Posterior vena cava (tissue), 2 donors: ENCODE measurements at regions of chr7 and their contacts with region 1.

Region 1: DNA sequence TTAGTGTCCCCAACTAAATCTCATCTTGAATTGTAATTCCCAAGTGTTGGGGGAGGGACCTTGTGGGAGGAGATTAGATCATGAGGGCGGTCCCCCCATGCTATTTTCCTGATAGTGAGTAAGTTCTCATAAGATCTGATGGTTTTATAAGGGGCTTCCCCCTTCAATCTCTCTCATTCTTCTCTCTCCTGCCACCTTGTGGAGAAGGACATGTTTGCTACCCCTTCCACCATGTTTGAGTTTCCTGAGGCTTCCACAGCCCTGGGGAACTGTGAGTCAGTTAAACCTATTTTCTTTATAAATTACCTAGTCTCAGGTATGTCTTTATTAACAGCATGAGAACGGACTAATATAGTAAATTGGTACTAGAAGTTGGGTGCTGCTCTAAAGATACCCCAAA is 365.6 kb downstream of the ANKRD7 start:
- DNase-seq: no peak

Region 2: GRCh38 chr7:118559207-118559606 is 30.9 kb before region 1 on chr7:
- intact Hi-C with region 1: loop called in 1 of 2 experiments (anchors 1 kb)
- DNase-seq: no peak